Vagina (tissue), 2 donors: ENCODE measurements at regions of chr5 and their contacts with region 1.

Region 1: DNA sequence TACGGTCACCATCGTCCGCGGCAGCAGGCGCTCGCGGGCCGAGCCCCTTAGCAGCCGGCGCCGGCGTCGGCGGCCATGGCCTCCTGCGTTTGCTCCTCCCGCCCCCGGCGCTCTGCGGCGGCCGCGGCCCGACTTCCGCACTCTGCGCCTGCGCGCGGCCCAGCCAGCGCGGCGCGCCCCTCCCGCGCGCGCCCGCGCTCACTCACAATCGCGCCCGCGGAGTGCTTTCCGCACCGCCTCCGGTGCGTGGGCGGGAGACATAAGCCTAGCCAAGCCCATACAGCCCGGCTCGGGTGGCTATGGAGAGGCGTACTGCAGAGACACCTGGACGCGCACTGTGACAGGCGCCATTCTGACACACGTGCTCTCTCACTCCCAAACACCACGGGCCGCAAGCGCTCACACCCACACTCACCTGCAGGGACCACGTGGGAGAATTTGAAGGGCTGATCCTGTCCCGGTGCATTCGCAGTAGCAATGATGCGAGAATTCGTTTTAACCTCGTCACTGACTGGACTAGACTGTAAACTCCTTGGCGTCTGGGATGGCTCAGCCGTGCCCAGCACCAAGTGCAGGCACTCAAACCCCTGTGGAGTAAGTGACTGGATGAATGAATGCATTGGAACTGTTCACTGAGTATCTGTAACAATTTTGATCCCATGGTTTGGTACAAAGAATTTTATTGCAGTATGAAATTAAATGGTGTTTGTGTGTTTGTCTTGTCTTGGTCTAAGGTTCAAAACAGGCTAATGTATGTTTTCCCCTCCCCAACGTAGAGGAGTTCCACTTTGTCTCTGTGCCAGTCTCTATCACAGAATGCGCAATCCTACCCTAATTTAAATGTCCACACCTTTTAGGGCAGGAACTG is at the start of gene RNF145:
- DNase-seq: peak in 1 of 2 donors; percentile 93
- H3K4me3 ChIP-seq: peak within 1 kb of the TSS; percentile 91 to 94
- H3K27ac ChIP-seq: peak within 1 kb of the TSS; percentile 96
- H3K4me1 ChIP-seq: peaks cover 32% of the 10 kb centered on the region
- H3K27me3 ChIP-seq: no peaks in the 10 kb centered on the region
- CTCF ChIP-seq: no peak
- POLR2A ChIP-seq: peak in 1 of 2 donors; percentile 19
- total RNA-seq, gene RNF145: 67.8 TPM

Region 2: GRCh38 chr5:158658446-158659230 is 551.0 kb before region 1 on chr5:
- intact Hi-C with region 1: no loop called
- DNase-seq: no peak
- H3K4me3 ChIP-seq: no peak overlapping the region
- H3K27ac ChIP-seq: no peak overlapping the region
- H3K4me1 ChIP-seq: no peaks in the 10 kb centered on the region
- H3K27me3 ChIP-seq: no peaks in the 10 kb centered on the region
- CTCF ChIP-seq: no peak
- POLR2A ChIP-seq: no peak

Region 3: DNA sequence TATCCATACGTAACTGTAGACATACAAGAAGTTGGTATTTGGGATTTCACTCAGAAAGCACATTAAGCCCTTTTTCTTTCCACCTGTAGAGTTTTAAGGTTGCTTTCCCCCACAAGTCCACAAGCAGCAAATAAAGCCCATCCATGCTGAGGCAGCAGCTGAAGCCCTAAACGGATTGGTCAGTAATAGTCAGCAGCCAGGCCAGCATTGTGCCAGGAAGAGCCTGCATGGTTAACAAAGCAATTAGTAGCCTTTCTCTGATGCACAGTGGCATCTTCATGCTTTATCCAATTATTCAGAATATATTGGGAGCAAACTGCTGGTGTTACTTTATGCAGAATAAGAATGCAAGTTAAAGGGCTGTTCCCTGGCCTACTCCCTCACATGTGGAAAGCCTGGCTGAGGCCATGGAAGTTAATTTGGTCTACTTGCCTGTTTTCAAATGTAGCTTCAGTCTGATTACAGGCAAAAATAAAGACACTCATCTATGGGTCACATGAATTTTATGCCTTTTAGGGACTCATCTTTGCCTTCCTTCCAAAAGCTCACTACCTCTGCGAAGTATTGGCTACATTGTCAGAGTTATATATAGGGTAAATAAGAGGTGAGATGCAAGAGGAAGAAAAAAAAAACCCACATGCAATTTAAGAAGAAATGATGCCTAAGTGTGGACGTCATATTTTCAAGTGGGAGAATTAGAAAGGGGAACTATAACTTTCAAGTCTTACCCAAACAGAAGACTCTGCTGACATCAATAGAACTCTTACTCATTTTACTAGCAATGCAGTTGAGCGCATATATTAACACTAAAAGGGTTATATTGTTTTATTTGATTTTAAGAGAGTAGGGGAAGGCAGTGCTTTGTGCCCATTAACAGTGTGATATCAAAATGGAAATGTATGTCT is 125.9 kb before region 1 on chr5:
- intact Hi-C with region 1: no loop called
- DNase-seq: no peak
- H3K4me3 ChIP-seq: no peak overlapping the region
- H3K27ac ChIP-seq: no peak overlapping the region
- H3K4me1 ChIP-seq: peaks cover 9% of the 10 kb centered on the region
- H3K27me3 ChIP-seq: no peaks in the 10 kb centered on the region
- CTCF ChIP-seq: no peak
- POLR2A ChIP-seq: no peak

Region 4: GRCh38 chr5:159262859-159263567 is 53.3 kb after region 1 on chr5 and contains the start of gene UBLCP1:
- intact Hi-C with region 1: loop called (anchors 5 kb)
- DNase-seq: no peak
- H3K4me3 ChIP-seq: peak within 1 kb of the TSS; percentile 83 to 86
- H3K27ac ChIP-seq: peak within 1 kb of the TSS; percentile 76
- H3K4me1 ChIP-seq: peaks cover 28% of the 10 kb centered on the region
- H3K27me3 ChIP-seq: no peaks in the 10 kb centered on the region
- CTCF ChIP-seq: no peak
- POLR2A ChIP-seq: no peak
- total RNA-seq, gene UBLCP1: 15.0 TPM

Region 5: DNA sequence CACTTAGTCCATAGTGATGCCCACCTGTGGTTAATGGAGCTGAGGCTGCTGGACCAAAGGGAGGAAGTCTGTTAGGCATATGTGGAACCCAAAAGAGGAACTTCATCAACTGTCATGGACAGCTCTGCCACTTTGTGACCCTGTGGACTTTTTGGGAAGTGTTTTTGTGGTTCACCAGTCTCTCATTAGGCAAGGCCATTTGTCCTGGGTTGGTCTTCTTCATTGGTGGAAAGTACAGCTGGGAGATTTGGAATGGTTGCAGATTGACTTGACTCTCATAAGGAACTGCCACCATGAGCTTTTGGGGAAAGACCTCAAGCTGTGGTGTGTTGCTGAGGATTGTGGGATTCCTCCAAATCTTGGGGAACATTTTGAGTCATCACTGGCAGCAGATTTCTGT is 152.5 kb after region 1 on chr5:
- intact Hi-C with region 1: no loop called
- DNase-seq: no peak
- H3K4me3 ChIP-seq: no peak overlapping the region
- H3K27ac ChIP-seq: no peak overlapping the region
- H3K4me1 ChIP-seq: no peaks in the 10 kb centered on the region
- H3K27me3 ChIP-seq: no peaks in the 10 kb centered on the region
- CTCF ChIP-seq: no peak
- POLR2A ChIP-seq: no peak